Posterior cingulate gyrus (tissue), 11 donors: ENCODE measurements at regions of chr18 and their contacts with region 1.

Region 1: GRCh38 chr18:32018331-32019250 is at the start of gene RNF125:
- DNase-seq: peak; percentile 52 to 95 (median 64)

Region 2: GRCh38 chr18:32072321-32072720 is 53.7 kb after region 1 on chr18:
- intact Hi-C with region 1: loop called (anchors 5 kb)
- DNase-seq: no peak

Region 3: GRCh38 chr18:32092422-32093101 is 74.0 kb after region 1 on chr18:
- intact Hi-C with region 1: loop called (anchors 2 kb)
- DNase-seq: peak; percentile 97 to 100 (median 100)